Activated B cell treated with CpG ODN at 0.5 μM for 24 hours (primary cell): ENCODE measurements at regions of chr5 and their contacts with region 1.

Region 1: DNA sequence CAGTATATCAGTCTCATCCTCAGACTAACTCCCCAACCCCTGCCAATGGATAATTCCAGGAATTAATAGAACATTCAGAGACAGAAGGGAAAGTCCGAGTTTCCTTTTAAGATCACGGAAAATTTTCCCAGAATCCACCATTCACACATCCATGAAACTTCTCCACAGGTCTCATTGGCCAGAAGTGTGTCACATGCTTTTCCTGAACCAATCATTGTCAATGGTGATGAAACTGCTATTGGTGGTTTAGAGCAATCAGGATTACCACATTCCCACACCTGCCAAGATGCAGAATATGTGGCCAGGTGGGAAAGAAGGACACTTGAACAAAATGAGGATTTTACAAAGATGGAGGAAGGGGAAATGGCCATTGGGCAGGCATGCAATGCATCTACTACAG is 29.3 kb upstream of the SNX2 start:
- DNase-seq: no peak
- ATAC-seq: no peak
- H3K4me3 Mint-ChIP-seq: no peak overlapping the region
- H3K27ac Mint-ChIP-seq: no peak overlapping the region
- H3K4me1 Mint-ChIP-seq: peaks cover under 1% of the 10 kb centered on the region
- H3K27me3 Mint-ChIP-seq: no peaks in the 10 kb centered on the region
- CTCF ChIP-seq: no peak

Region 2: GRCh38 chr5:122639864-122640263 is 105.7 kb before region 1 on chr5:
- CTCF ChIA-PET with region 1: no interaction called
- POLR2A ChIA-PET with region 1: no interaction called
- intact Hi-C with region 1: no loop called
- DNase-seq: no peak
- ATAC-seq: no peak
- H3K4me3 Mint-ChIP-seq: no peak overlapping the region
- H3K27ac Mint-ChIP-seq: no peak overlapping the region
- H3K4me1 Mint-ChIP-seq: no peaks in the 10 kb centered on the region
- H3K27me3 Mint-ChIP-seq: peaks cover 6% of the 10 kb centered on the region
- CTCF ChIP-seq: no peak

Region 3: DNA sequence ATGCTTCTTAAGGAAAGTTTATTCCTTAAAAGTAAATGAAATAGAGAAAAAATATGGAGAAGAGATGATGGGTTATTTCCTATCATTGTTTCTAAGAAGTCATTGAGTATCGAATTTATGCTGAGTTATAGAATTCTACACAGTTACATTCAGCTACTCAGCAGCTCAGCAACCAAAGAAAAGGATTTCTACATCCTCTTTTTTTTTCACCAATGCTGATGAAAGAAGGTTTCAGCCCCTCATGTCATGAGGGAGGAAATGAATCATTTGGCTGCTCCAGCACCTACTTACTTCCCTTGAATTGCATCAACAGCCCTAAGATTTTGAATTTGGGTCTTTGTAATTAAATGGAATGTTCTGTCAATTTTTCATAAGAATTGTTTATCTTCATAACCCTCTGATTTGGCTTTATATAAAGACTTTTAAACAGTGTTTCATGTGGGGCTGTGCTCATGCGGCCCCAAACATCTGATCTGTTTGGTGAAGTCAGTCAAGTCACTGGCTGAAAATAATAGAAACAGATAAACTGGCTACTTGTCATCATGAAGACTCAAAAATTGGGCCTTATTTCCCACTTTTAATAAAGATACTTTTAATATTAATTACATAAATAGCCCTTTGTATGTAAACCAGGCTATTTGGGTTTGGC is 10.8 kb after region 1 on chr5:
- CTCF ChIA-PET with region 1: no interaction called
- POLR2A ChIA-PET with region 1: no interaction called
- intact Hi-C with region 1: loop called (anchors 1 kb)
- DNase-seq: no peak
- ATAC-seq: peak; percentile 86
- H3K4me3 Mint-ChIP-seq: peak overlapping the region; percentile 1
- H3K27ac Mint-ChIP-seq: peak overlapping the region; percentile 72
- H3K4me1 Mint-ChIP-seq: peaks cover 28% of the 10 kb centered on the region
- H3K27me3 Mint-ChIP-seq: no peaks in the 10 kb centered on the region
- CTCF ChIP-seq: no peak